ENCODE measurements at regions of chr19 and their contacts with region 1.

Region 1: GRCh38 chr19:21835810-21836444 is at the start of gene ZNF43:
- DNase-seq: peak; percentile 85 to 96 (median 93)
- ATAC-seq: peak; percentile 99
- H3K4me3 ChIP-seq: peak within 1 kb of the TSS; percentile 90 to 95
- H3K4me3 Mint-ChIP-seq: peak within 1 kb of the TSS; percentile 95 to 100 (median 99)
- H3K27ac ChIP-seq: peak within 1 kb of the TSS; percentile 76
- H3K27ac Mint-ChIP-seq: peak within 1 kb of the TSS; percentile 97 to 98
- H3K4me1 ChIP-seq: peaks cover 7 to 31% of the 10 kb centered on the region in 2 experiments
- H3K4me1 Mint-ChIP-seq: peaks cover 29 to 39% (median 36%) of the 10 kb centered on the region in 3 donors
- H3K27me3 ChIP-seq: no peaks in the 10 kb centered on the region
- H3K27me3 Mint-ChIP-seq: no peaks in the 10 kb centered on the region
- total RNA-seq, gene ZNF43: 22.3 to 31.5 (median 25.0) TPM

Region 2: DNA sequence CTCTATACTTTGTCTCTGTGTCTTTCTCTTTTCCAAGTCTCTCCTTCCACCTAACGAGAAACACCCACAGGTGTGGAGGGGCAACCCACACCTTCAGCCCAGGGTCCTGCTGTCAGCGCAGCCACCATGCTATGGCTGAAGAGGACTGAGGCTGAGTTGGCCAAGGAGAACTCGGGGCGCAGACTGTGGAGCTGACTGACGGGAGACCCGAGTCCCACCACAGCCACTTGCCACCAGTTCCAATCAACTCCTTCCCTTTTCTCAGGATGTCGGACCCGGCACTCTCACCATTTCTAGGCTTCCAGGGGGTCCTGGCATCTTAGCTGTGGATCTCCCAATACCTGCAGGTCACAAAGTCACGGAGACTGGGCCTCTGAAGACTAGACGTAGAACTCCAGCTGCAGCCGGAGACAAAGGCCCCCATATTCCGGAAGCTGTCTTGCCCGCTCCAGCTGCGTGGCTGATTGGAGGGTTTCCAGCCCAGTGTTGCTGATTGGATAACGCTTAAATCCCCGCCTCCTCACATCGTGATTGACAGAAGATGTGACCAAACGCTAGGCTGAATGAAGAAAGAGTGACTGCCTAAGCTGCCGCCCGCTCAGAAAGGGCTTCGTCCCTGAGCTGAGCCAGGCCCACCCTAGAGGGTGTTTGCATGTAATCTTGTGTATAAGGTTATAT is 267.0 kb before region 1 on chr19:
- CTCF ChIA-PET with region 1: no interaction called
- POLR2A ChIA-PET with region 1: interaction called in 1 of 2 experiments, 14 read pairs
- DNase-seq: peak; percentile 35 to 96 (median 80)
- ATAC-seq: peak; percentile 97 to 99 (median 98)
- H3K4me3 ChIP-seq: peak overlapping the region; percentile 18 to 90
- H3K4me3 Mint-ChIP-seq: peak overlapping the region; percentile 94 to 95 (median 94)
- H3K27ac ChIP-seq: no peak overlapping the region
- H3K27ac Mint-ChIP-seq: peak overlapping the region; percentile 96
- H3K4me1 ChIP-seq: peaks cover 7 to 17% of the 10 kb centered on the region in 2 experiments
- H3K4me1 Mint-ChIP-seq: peaks cover 16 to 18% (median 18%) of the 10 kb centered on the region in 3 donors
- H3K27me3 ChIP-seq: peaks cover 0 to 4% of the 10 kb centered on the region in 2 experiments
- H3K27me3 Mint-ChIP-seq: no peaks in the 10 kb centered on the region

Region 3: GRCh38 chr19:21767065-21767800 is 68.7 kb before region 1 on chr19 and contains the start of gene ZNF100:
- CTCF ChIA-PET with region 1: interaction called, 3 to 9 read pairs
- POLR2A ChIA-PET with region 1: interaction called in 1 of 2 experiments, 10 read pairs
- DNase-seq: peak; percentile 66 to 91 (median 83)
- ATAC-seq: peak; percentile 98
- H3K4me3 ChIP-seq: peak within 1 kb of the TSS; percentile 95 to 96
- H3K4me3 Mint-ChIP-seq: peak within 1 kb of the TSS; percentile 91 to 96 (median 94)
- H3K27ac ChIP-seq: peak within 1 kb of the TSS; percentile 80
- H3K27ac Mint-ChIP-seq: peak within 1 kb of the TSS; percentile 90 to 91
- H3K4me1 ChIP-seq: peaks cover 2 to 11% of the 10 kb centered on the region in 2 experiments
- H3K4me1 Mint-ChIP-seq: peaks cover 12 to 35% (median 34%) of the 10 kb centered on the region in 3 donors
- H3K27me3 ChIP-seq: no peaks in the 10 kb centered on the region
- H3K27me3 Mint-ChIP-seq: no peaks in the 10 kb centered on the region
- total RNA-seq, gene ZNF100: 6.3 to 23.5 (median 21.1) TPM

Region 4: GRCh38 chr19:21851596-21852345 is 15.8 kb after region 1 on chr19:
- CTCF ChIA-PET with region 1: interaction called, 12 to 21 read pairs
- POLR2A ChIA-PET with region 1: interaction called, 4 to 21 read pairs
- DNase-seq: peak; percentile 77 to 93 (median 86)
- ATAC-seq: peak; percentile 98 to 99 (median 99)
- H3K4me3 ChIP-seq: peak overlapping the region; percentile 88 to 89
- H3K4me3 Mint-ChIP-seq: peak overlapping the region; percentile 88 to 94 (median 93)
- H3K27ac ChIP-seq: peak overlapping the region; percentile 81
- H3K27ac Mint-ChIP-seq: peak overlapping the region; percentile 89 to 92
- H3K4me1 ChIP-seq: peaks cover 0 to 19% of the 10 kb centered on the region in 2 experiments
- H3K4me1 Mint-ChIP-seq: peaks cover 22 to 26% (median 24%) of the 10 kb centered on the region in 3 donors
- H3K27me3 ChIP-seq: peaks cover 0 to 3% of the 10 kb centered on the region in 2 experiments
- H3K27me3 Mint-ChIP-seq: no peaks in the 10 kb centered on the region

Region 5: GRCh38 chr19:21883516-21883915 is 47.6 kb after region 1 on chr19:
- CTCF ChIA-PET with region 1: no interaction called
- POLR2A ChIA-PET with region 1: no interaction called
- DNase-seq: no peak
- ATAC-seq: no peak
- H3K4me3 ChIP-seq: no peak overlapping the region
- H3K4me3 Mint-ChIP-seq: no peak overlapping the region
- H3K27ac ChIP-seq: no peak overlapping the region
- H3K27ac Mint-ChIP-seq: no peak overlapping the region
- H3K4me1 ChIP-seq: no peaks in the 10 kb centered on the region
- H3K4me1 Mint-ChIP-seq: no peaks in the 10 kb centered on the region
- H3K27me3 ChIP-seq: no peaks in the 10 kb centered on the region
- H3K27me3 Mint-ChIP-seq: peaks cover 7 to 20% of the 10 kb centered on the region in 2 donors

Region 6: DNA sequence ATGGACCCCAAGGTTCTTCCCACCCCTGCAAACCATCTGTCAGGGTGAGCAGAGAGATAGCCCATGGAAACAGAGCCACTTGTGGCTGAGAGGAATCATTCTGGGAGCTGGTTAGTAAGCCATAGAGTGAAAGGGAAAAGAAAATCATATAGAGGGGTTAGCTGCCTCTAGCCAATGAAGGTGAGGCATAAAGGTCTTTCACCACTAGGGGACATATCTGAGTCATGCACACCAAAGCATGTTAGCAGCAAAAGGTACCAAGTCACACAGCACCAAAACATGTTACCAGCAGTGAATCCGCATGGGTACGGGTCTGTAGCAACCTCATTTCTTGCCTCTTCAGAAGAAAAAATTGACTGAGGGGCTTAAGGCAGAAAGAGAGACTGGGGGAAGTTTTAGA is 76.7 kb after region 1 on chr19:
- CTCF ChIA-PET with region 1: no interaction called
- POLR2A ChIA-PET with region 1: no interaction called
- DNase-seq: no peak
- ATAC-seq: no peak
- H3K4me3 ChIP-seq: no peak overlapping the region
- H3K4me3 Mint-ChIP-seq: no peak overlapping the region
- H3K27ac ChIP-seq: no peak overlapping the region
- H3K27ac Mint-ChIP-seq: no peak overlapping the region
- H3K4me1 ChIP-seq: no peaks in the 10 kb centered on the region
- H3K4me1 Mint-ChIP-seq: no peaks in the 10 kb centered on the region
- H3K27me3 ChIP-seq: no peaks in the 10 kb centered on the region
- H3K27me3 Mint-ChIP-seq: no peaks in the 10 kb centered on the region